OCI-LY7 (cell line): ENCODE measurements at regions of chr2 and their contacts with region 1.

Region 1: DNA sequence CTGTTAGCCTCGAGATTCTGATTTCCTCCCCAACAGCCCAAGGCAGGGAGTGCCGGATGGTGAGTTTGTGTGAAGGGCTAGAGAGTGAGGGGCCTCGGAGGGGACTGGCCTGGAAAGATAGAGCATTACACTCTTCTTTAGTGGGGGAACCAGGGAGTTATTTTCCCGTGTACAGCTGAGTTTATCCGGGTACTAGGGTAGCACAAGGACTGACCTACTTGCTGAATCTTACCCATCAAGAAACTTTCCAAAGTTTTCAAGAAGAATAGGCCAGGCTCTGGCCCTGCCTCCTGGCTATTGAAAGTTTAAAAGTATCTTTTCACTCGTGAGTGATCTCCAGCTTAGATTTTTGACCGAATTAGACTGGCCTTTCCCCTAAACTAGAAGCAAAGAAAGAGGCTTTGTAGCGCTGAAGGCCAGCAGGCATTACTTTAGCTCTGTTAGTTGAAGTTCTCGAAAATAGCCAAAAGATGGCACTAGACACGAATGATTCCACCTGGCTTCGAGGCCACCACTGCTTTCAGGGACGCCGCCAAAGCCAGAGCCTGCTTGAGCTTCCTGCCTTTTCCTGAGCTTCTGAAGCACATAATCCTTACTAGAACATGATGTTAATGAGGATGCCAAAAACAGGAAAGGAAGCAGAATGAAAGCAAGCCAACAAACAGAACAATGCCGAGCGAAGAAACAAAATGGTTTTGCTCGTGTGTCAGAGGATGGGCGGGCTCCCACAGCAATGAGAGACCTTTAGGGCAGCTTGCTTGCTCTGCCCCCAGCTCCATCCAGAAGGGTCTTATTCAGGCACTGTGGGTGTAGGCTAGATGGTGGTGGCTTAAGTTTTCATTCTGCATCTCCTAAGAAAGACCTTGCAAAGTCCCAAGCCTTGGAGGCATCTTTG is 55.8 kb downstream of the TSN start:
- DNase-seq: peak; percentile 78
- H3K4me3 ChIP-seq: no peak overlapping the region
- H3K27ac ChIP-seq: no peak overlapping the region
- H3K4me1 ChIP-seq: peaks cover 20% of the 10 kb centered on the region
- CTCF ChIP-seq: peak; percentile 86

Region 2: DNA sequence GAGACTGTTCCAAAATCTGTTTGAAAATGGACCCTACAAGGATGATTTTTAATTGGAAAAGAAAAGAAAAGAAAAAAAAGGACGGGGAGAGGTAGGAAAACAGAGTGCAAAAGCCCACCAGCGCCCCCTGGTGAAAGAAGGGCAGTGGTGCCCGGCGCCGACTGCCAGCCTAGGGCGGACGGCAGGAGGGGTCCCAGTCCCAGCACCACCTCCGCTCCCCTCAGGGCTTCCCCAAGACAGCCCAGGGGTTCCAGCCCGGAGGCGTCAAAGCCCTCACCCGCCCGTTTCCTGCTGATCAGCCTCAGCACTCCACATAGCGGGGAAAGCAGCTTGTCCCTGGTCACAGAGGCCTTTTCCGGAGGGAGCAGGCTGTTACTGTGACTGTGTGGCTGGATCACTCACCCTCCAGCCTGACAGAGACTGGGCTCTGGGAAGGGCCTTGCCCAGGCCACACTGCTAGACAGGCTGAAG is 740.1 kb before region 1 on chr2:
- CTCF ChIA-PET with region 1: no interaction called
- POLR2A ChIA-PET with region 1: no interaction called
- intact Hi-C with region 1: no loop called
- DNase-seq: peak; percentile 51
- H3K4me3 ChIP-seq: no peak overlapping the region
- H3K27ac ChIP-seq: no peak overlapping the region
- H3K4me1 ChIP-seq: no peaks in the 10 kb centered on the region
- CTCF ChIP-seq: peak; percentile 87

Region 3: DNA sequence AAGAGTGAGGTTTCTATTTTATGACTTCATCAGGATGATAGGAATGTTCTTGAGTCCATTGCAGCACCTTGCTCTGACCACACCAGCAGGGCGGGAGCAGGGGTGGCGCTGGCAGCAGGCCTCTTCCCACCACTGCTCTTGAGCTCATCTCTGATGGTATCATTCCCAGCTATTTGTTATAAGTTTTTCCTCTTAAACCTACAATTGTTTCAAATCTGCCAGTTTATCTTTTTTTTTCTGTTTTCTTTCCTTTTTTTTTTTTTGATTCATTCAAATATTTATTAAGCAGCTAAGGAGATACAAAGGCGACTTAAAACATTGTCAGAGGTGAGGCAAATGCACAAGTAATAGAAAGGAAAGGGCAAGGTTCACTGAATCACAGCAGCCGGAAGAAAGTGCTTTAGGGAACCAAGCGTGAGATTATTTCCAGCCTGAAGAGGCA is 103.3 kb before region 1 on chr2:
- CTCF ChIA-PET with region 1: no interaction called
- POLR2A ChIA-PET with region 1: no interaction called
- intact Hi-C with region 1: no loop called
- DNase-seq: no peak
- H3K4me3 ChIP-seq: no peak overlapping the region
- H3K27ac ChIP-seq: no peak overlapping the region
- H3K4me1 ChIP-seq: peaks cover 8% of the 10 kb centered on the region
- CTCF ChIP-seq: no peak

Region 4: DNA sequence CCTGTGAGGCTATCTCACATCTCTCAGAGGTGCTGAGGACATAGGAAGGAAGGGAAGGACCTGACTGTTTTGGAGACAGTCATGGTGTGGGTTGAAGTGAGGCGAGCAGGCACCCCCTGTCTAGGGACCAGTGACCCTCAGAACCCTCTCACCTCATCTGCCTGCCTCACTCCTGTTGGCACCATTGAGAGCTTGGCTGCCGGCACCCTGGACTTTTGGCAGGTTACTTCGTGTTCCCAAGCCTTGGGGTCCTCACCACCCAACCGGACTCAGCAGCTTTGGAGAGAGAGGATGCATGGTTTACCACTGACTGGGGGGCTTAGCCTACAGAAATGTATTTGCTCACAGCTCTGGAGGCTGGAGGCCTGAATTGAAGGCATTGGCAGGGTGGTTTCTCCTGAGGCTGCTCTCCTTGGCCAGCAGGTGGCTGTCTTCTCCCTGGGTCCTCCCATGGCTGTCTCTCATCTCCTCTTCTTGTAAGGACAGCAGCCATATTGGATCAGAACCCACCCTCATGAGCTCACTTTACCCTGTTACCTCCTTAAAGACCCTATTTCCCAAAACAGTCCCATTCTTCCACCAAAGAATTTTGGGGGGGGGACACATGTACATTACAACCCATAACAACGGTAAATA is 86.2 kb after region 1 on chr2:
- CTCF ChIA-PET with region 1: no interaction called
- POLR2A ChIA-PET with region 1: interaction called, 3 read pairs
- intact Hi-C with region 1: loop called (anchors 1 kb)
- DNase-seq: peak; percentile 56
- H3K4me3 ChIP-seq: no peak overlapping the region
- H3K27ac ChIP-seq: no peak overlapping the region
- H3K4me1 ChIP-seq: no peaks in the 10 kb centered on the region
- CTCF ChIP-seq: peak; percentile 82

Region 5: DNA sequence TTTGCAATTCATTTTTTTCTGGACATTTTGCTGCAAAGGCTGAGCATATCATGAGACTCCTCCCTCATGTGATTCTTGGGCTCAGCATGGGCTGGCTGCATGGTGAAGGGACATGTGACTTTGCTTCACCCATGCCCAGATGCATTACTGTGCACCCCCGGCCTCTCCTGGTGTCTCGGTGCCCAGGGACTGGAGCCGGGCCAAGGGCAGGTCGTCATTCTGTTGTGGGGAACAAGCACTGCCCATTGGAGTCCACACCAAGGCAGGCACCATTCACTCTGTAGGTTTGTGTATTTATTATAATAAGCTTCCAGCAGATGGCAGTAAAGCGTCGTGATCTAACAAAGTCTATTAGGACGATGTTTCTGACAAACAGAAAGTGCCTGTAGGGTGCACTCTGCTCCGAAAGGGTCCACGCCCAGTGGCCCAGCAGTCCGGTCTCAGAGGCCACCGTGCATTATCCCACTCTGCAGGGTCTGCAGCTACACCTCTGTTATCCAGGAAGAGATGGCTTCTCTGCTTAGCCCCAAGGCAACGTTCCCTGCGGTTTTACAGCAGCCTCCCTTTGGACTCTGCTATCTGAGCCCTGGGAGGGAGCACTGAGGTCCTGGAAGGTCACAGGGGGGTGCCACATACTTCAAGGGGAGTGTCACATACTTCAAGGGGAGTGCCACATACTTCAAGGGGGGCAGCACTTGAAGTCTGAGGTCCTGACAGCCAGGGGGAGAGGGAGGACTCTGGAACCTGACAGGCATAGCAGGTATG is 163.9 kb after region 1 on chr2:
- CTCF ChIA-PET with region 1: interaction called, 3 read pairs
- POLR2A ChIA-PET with region 1: no interaction called
- intact Hi-C with region 1: loop called (anchors 1 kb)
- DNase-seq: peak; percentile 86
- H3K4me3 ChIP-seq: peak overlapping the region; percentile 22
- H3K27ac ChIP-seq: no peak overlapping the region
- H3K4me1 ChIP-seq: no peaks in the 10 kb centered on the region
- CTCF ChIP-seq: peak; percentile 81

Region 6: GRCh38 chr2:122136056-122136455 is 324.9 kb after region 1 on chr2:
- CTCF ChIA-PET with region 1: no interaction called
- POLR2A ChIA-PET with region 1: no interaction called
- intact Hi-C with region 1: loop called (anchors 1 kb)
- DNase-seq: peak; percentile 57
- H3K4me3 ChIP-seq: no peak overlapping the region
- H3K27ac ChIP-seq: no peak overlapping the region
- H3K4me1 ChIP-seq: no peaks in the 10 kb centered on the region
- CTCF ChIP-seq: peak; percentile 74

Region 7: GRCh38 chr2:122300758-122301157 is 489.6 kb after region 1 on chr2:
- CTCF ChIA-PET with region 1: no interaction called
- POLR2A ChIA-PET with region 1: no interaction called
- intact Hi-C with region 1: loop called (anchors 5 kb)
- DNase-seq: peak; percentile 26
- H3K4me3 ChIP-seq: no peak overlapping the region
- H3K27ac ChIP-seq: no peak overlapping the region
- H3K4me1 ChIP-seq: no peaks in the 10 kb centered on the region
- CTCF ChIP-seq: peak; percentile 72

Region 8: DNA sequence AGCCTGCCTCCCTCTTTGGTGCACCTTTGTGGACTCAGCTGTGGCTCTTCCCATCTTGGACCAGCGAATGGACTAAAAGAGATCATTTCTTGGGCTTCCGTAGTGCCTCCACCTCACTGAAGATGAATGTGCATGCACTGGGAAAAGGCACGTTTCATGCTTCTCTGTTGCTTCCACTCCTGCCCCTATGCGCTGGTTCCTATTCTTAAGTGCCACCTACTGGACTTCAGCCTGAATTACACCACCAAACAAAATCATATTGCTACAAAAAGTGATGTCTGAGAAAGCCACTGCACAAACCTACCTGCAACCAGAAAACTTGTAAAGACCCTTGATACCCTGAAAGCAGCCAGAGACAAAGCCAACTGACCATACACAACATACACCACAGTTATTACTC is 639.8 kb after region 1 on chr2:
- CTCF ChIA-PET with region 1: no interaction called
- POLR2A ChIA-PET with region 1: no interaction called
- intact Hi-C with region 1: loop called (anchors 5 kb)
- DNase-seq: peak; percentile 46
- H3K4me3 ChIP-seq: no peak overlapping the region
- H3K27ac ChIP-seq: no peak overlapping the region
- H3K4me1 ChIP-seq: no peaks in the 10 kb centered on the region
- CTCF ChIP-seq: peak; percentile 82